MCF 10A (cell line): ENCODE measurements at regions of chr13 and their contacts with region 1.

Region 1: GRCh38 chr13:35978603-35979316 is 152.4 kb downstream of the DCLK1 start:
- DNase-seq: peak; percentile 82
- H3K4me3 Mint-ChIP-seq: no peak overlapping the region
- H3K27ac Mint-ChIP-seq: peak overlapping the region; percentile 77
- H3K4me1 Mint-ChIP-seq: peaks cover 17% of the 10 kb centered on the region
- H3K27me3 Mint-ChIP-seq: no peaks in the 10 kb centered on the region
- CTCF ChIP-seq: peak; percentile 67

Region 2: GRCh38 chr13:36030670-36031331 is 52.0 kb after region 1 on chr13:
- CTCF ChIA-PET with region 1: no interaction called
- POLR2A ChIA-PET with region 1: interaction called, 4 read pairs
- intact Hi-C with region 1: loop called (anchors 2 kb)
- DNase-seq: peak; percentile 89
- H3K4me3 Mint-ChIP-seq: no peak overlapping the region
- H3K27ac Mint-ChIP-seq: peak overlapping the region; percentile 66
- H3K4me1 Mint-ChIP-seq: peaks cover 13% of the 10 kb centered on the region
- H3K27me3 Mint-ChIP-seq: no peaks in the 10 kb centered on the region
- CTCF ChIP-seq: no peak

Region 3: DNA sequence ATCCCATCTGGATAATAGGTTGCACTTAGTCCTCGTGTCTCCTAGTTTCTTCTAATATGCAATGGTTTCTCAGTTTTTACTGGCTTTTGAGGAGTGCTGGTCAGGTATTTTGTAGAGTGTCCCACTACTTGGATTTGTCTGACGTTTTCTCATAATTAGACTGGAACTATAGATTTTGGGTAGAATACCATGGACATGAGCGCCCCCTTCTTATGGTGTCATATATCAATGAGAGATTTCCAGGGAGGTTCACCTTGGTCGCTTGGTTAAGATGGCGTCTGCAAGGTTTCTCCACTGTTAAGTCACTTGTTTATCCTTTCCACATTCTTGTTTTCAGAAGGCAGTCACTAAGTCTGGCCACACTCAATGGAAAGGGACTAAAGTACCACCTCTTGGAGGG is 228.9 kb after region 1 on chr13:
- CTCF ChIA-PET with region 1: interaction called, 5 read pairs
- POLR2A ChIA-PET with region 1: no interaction called
- intact Hi-C with region 1: loop called (anchors 1 kb)
- DNase-seq: peak; percentile 34
- H3K4me3 Mint-ChIP-seq: no peak overlapping the region
- H3K27ac Mint-ChIP-seq: no peak overlapping the region
- H3K4me1 Mint-ChIP-seq: no peaks in the 10 kb centered on the region
- H3K27me3 Mint-ChIP-seq: no peaks in the 10 kb centered on the region
- CTCF ChIP-seq: peak; percentile 13

Region 4: GRCh38 chr13:36275190-36276002 is 296.6 kb after region 1 on chr13:
- CTCF ChIA-PET with region 1: interaction called, 278 read pairs
- POLR2A ChIA-PET with region 1: interaction called, 30 read pairs
- intact Hi-C with region 1: loop called (anchors 1 kb)
- DNase-seq: peak; percentile 61
- H3K4me3 Mint-ChIP-seq: no peak overlapping the region
- H3K27ac Mint-ChIP-seq: no peak overlapping the region
- H3K4me1 Mint-ChIP-seq: no peaks in the 10 kb centered on the region
- H3K27me3 Mint-ChIP-seq: no peaks in the 10 kb centered on the region
- CTCF ChIP-seq: peak; percentile 68

Region 5: GRCh38 chr13:36346222-36347083 is 367.7 kb after region 1 on chr13 and contains the start of gene SPART:
- CTCF ChIA-PET with region 1: interaction called, 6 read pairs
- POLR2A ChIA-PET with region 1: no interaction called
- intact Hi-C with region 1: loop called (anchors 10 kb)
- DNase-seq: peak; percentile 91
- H3K4me3 Mint-ChIP-seq: peak within 1 kb of the TSS; percentile 82
- H3K27ac Mint-ChIP-seq: peak within 1 kb of the TSS; percentile 97
- H3K4me1 Mint-ChIP-seq: peaks cover 13% of the 10 kb centered on the region
- H3K27me3 Mint-ChIP-seq: no peaks in the 10 kb centered on the region
- CTCF ChIP-seq: peak; percentile 92
- total RNA-seq, gene SPART: 83.1 and 100.0 TPM in 2 replicates

Region 6: GRCh38 chr13:36981156-36981743 is 1002.5 kb after region 1 on chr13:
- CTCF ChIA-PET with region 1: interaction called, 4 read pairs
- POLR2A ChIA-PET with region 1: no interaction called
- intact Hi-C with region 1: loop called (anchors 2 kb)
- DNase-seq: peak; percentile 48
- H3K4me3 Mint-ChIP-seq: no peak overlapping the region
- H3K27ac Mint-ChIP-seq: no peak overlapping the region
- H3K4me1 Mint-ChIP-seq: no peaks in the 10 kb centered on the region
- H3K27me3 Mint-ChIP-seq: no peaks in the 10 kb centered on the region
- CTCF ChIP-seq: peak; percentile 52